ENCODE measurements at regions of chr22 and their contacts with region 1.

Region 1: GRCh38 chr22:49930739-49931412 is 12.4 kb downstream of the CRELD2 start:
- DNase-seq: peak; percentile 80 to 86
- ATAC-seq: peak; percentile 50 to 77
- H3K4me3 ChIP-seq: no peak overlapping the region
- H3K27ac ChIP-seq: peak overlapping the region; percentile 64 to 99 (median 96)
- H3K4me1 ChIP-seq: peaks cover 42 to 48% of the 10 kb centered on the region in 2 donors
- H3K27me3 ChIP-seq: peaks cover 0 to 7% (median 4%) of the 10 kb centered on the region in 3 donors
- CTCF ChIP-seq: peak; percentile 31 to 77 (median 65)
- POLR2A ChIP-seq: no peak

Region 2: GRCh38 chr22:49749885-49750772 is 180.7 kb before region 1 on chr22:
- in situ Hi-C with region 1: no loop called
- intact Hi-C with region 1: no loop called
- DNase-seq: peak in 1 of 2 donors; percentile 4
- ATAC-seq: no peak
- H3K4me3 ChIP-seq: no peak overlapping the region
- H3K27ac ChIP-seq: no peak overlapping the region
- H3K4me1 ChIP-seq: no peaks in the 10 kb centered on the region
- H3K27me3 ChIP-seq: no peaks in the 10 kb centered on the region
- CTCF ChIP-seq: no peak
- POLR2A ChIP-seq: no peak

Region 3: DNA sequence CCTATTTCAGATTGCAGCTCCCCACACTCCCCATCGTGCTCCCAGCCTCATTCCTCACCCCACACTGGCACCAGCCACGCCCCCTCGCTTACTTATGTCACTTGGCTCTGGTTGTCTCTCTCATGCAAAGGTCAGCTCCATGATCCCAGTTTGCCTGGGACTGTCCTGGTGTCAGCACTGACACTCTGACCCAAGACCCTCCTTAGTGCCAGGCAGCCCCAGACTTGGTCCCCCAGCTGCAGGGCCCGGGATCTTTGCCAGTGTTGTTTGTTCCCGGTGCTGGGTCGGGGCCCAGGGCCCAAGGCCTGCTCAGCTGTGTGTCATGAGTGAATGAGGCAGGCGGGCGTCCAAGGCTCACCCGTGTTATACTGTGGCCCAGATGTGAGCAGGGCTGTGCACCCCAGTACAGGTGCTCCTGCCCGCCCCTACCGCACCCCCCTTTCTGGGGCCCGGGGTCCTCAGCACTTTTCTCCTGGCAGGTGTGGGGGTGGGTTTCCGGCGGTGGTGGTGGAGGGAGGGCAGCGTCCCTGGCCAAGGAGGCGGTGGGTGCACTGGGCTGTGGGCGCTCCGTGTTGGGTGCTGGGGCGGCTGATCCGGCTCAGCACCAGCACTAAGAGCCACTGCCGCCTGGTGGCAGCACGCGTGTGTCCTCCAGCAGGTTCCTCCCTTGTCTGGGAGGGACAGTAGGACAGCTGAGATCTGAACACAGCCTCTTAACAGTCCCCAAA is 62.2 kb after region 1 on chr22:
- in situ Hi-C with region 1: loop called in 3 of 4 experiments (anchors 5 to 10 kb)
- intact Hi-C with region 1: loop called (anchors 1 kb)
- DNase-seq: peak in 1 of 2 donors; percentile 62
- ATAC-seq: peak; percentile 87 to 92
- H3K4me3 ChIP-seq: no peak overlapping the region
- H3K27ac ChIP-seq: no peak overlapping the region
- H3K4me1 ChIP-seq: peaks cover 0 to 4% of the 10 kb centered on the region in 2 donors
- H3K27me3 ChIP-seq: no peaks in the 10 kb centered on the region
- CTCF ChIP-seq: peak; percentile 70 to 89 (median 85)
- POLR2A ChIP-seq: no peak